Gastrocnemius medialis (tissue), 4 donors: ENCODE measurements at regions of chr6 and their contacts with region 1.

Region 1: GRCh38 chr6:30616811-30617564 is at the start of gene PPP1R10:
- DNase-seq: peak; percentile 100
- ATAC-seq: peak; percentile 79 to 81
- H3K4me3 ChIP-seq: peak within 1 kb of the TSS; percentile 71 to 89 (median 82)
- H3K27ac ChIP-seq: peak within 1 kb of the TSS; percentile 95 to 99 (median 98)
- H3K4me1 ChIP-seq: peaks cover 34 to 40% of the 10 kb centered on the region in 2 donors
- H3K27me3 ChIP-seq: no peaks in the 10 kb centered on the region
- CTCF ChIP-seq: no peak
- POLR2A ChIP-seq: peak; percentile 100
- total RNA-seq, gene PPP1R10: 24.1 to 31.5 (median 27.0) TPM

Region 2: DNA sequence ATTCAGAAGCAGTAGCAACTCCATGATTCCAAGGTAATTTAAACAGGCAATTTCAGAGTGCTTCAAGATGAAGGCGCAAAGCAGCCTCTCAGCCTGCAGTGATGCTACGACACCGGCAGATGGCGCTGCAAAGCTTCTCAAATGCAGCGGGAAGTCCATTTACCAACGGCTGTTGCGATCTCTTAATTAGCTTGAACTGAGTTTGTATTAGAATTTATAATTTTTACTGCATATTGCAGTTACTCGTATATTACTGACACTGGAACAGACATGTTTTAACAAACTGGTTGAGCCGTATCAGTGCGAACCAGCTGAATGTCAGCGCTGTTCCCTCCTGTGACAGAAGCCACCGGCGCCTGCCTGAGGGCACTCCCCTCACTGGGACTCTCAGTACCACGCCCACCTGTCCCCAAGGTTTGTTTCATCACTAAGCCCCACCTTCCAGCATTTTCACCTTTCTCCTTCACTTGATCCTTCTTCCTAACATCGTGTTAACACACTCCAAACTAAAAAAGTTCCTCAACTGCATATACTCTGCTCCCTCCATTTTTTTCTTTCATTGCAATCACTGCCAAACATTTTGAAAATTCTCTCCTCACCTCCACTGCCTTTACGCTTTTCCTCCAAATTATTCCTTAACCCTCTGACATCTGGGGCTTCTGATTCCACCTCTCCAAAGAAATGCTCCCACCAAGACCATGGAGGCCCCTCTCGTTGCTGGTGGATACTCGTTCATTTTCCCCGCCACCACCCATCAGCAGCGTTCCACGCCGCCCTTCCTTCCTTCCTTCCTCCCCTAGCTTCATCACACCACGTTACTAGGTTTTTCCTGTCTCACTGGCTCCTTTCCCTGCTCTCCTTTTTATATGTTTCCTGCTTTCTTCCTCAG is 75.2 kb before region 1 on chr6:
- in situ Hi-C with region 1: no loop called
- intact Hi-C with region 1: loop called (anchors 5 kb)
- DNase-seq: peak; percentile 45 to 64
- ATAC-seq: peak; percentile 78 to 90
- H3K4me3 ChIP-seq: peak overlapping the region; percentile 36 to 52 (median 40)
- H3K27ac ChIP-seq: peak overlapping the region in 3 of 4 donors; percentile 48 to 59 (median 53)
- H3K4me1 ChIP-seq: peaks cover 5 to 13% of the 10 kb centered on the region in 2 donors
- H3K27me3 ChIP-seq: no peaks in the 10 kb centered on the region
- CTCF ChIP-seq: peak; percentile 84 to 97 (median 93)
- POLR2A ChIP-seq: peak in 1 of 2 donors; percentile 39

Region 3: GRCh38 chr6:30571075-30571768 is 45.8 kb before region 1 on chr6 and contains the start of gene ABCF1:
- in situ Hi-C with region 1: no loop called
- intact Hi-C with region 1: loop called (anchors 2 kb)
- DNase-seq: peak; percentile 96 to 97
- ATAC-seq: peak; percentile 91 to 94
- H3K4me3 ChIP-seq: peak within 1 kb of the TSS; percentile 72 to 96 (median 78)
- H3K27ac ChIP-seq: peak within 1 kb of the TSS; percentile 91 to 99 (median 94)
- H3K4me1 ChIP-seq: peaks cover 31 to 36% of the 10 kb centered on the region in 2 donors
- H3K27me3 ChIP-seq: no peaks in the 10 kb centered on the region
- CTCF ChIP-seq: no peak
- POLR2A ChIP-seq: peak; percentile 90 to 94
- total RNA-seq, gene ABCF1: 55.8 to 122 (median 111) TPM

Region 4: DNA sequence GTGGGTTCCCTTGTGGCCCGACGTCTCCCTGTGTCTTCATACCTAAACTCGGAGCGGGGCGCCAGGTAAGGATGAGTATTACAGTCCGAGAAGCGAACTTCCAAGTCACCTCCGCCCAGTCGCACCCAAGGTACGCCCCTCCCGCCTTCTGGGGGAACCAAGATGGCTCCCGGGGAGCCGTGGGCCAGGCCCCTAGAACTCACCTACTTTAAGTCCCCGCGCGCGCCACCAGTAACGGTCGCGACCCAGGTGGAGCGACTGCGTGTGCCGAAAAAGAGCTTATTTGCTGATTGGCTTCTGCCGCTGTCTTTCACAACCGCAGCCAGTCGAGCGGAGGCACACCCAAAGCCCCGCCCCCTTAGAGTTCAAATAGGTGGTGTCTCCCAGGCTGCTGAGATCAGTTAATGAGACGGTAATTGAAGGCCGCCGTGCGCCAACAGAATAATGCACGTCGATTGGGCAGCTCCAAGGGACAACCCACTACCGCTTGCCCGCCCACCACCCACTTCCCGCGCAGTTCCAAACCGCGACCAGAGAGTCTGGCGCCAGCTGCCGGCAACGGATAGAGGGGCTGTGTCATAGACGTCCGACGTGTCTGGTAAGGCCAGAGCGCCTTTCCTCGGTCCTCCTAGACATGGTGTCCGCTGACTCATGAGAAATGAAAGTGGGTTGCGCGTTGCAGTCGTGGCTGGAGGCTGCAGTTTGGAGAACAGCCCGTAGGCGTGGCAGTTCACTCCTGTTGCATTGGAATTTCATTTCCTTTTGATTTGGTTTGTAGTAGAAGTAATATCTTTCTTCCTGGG is 100.3 kb after region 1 on chr6 and contains the start of gene MDC1:
- in situ Hi-C with region 1: no loop called
- intact Hi-C with region 1: loop called (anchors 1 kb)
- DNase-seq: peak; percentile 100
- ATAC-seq: peak; percentile 79 to 80
- H3K4me3 ChIP-seq: peak within 1 kb of the TSS; percentile 69 to 91 (median 86)
- H3K27ac ChIP-seq: peak within 1 kb of the TSS; percentile 94 to 99 (median 97)
- H3K4me1 ChIP-seq: peaks cover 27 to 30% of the 10 kb centered on the region in 2 donors
- H3K27me3 ChIP-seq: no peaks in the 10 kb centered on the region
- CTCF ChIP-seq: peak; percentile 41 to 57 (median 46)
- POLR2A ChIP-seq: peak; percentile 62 to 91
- total RNA-seq, gene MDC1: 3.6 to 8.9 (median 6.2) TPM

Region 5: DNA sequence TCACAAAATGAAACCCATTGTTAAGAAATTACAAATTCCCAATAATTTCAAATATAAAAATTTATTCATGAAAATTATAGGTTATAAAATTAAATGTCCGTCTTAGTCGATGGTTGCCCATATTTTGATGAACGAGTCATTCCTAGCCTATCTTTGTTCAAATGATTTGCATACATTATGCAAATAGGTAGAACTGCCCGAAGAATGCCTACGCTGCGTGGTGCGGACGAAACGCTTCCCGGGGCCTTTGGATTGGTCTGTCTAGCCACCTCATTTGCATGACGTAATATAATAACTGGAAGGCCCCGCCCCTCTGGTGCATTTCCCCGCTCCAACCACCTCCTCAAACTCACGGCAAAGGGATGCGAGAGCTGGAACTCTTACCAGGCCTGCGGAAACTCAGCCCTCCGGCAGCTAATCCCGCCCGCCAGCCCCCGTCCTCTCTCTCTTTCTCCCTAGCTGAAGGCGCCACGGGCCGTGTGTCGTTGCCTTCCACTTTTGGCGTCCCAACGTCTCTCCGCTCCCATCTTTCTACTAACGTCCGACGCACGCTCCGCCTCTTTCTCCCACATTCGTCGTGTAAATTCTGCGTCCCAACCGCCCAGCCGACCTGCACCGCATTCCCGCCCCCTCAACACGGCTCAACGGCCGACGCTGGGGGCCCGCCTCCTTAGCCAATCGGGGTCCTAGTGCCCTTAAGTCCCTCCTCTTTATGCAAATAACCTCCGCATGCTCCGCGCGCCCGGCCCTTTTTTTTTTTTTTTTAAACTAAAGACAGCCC is 1003.0 kb after region 1 on chr6:
- in situ Hi-C with region 1: no loop called
- intact Hi-C with region 1: loop called (anchors 10 kb)
- DNase-seq: peak; percentile 97 to 99
- ATAC-seq: peak; percentile 86 to 87
- H3K4me3 ChIP-seq: peak overlapping the region; percentile 62 to 95 (median 82)
- H3K27ac ChIP-seq: peak overlapping the region; percentile 91 to 97 (median 96)
- H3K4me1 ChIP-seq: peaks cover 19 to 21% of the 10 kb centered on the region in 2 donors
- H3K27me3 ChIP-seq: no peaks in the 10 kb centered on the region
- CTCF ChIP-seq: no peak
- POLR2A ChIP-seq: peak; percentile 69 to 90